A549 (cell line): ENCODE measurements at regions of chr5 and their contacts with region 1.

Region 1: GRCh38 chr5:17216176-17216973 is 1.1 kb upstream of the BASP1 start:
- DNase-seq: peak; percentile 73 to 92
- ATAC-seq: peak; percentile 62 to 79
- H3K4me3 ChIP-seq: peak overlapping the region; percentile 95
- H3K27ac ChIP-seq: peak overlapping the region; percentile 98
- H3K4me1 ChIP-seq: peaks cover 43% of the 10 kb centered on the region
- CTCF ChIP-seq: peak; percentile 88
- EP300 ChIP-seq: peak in 1 of 2 experiments; percentile 24; a peak in 1 of 5 replicates
- POLR2A ChIP-seq: peak; percentile 28; the same call in 1 of the 2 replicates
- RAD21 ChIP-seq: peak; percentile 97 to 98

Region 2: DNA sequence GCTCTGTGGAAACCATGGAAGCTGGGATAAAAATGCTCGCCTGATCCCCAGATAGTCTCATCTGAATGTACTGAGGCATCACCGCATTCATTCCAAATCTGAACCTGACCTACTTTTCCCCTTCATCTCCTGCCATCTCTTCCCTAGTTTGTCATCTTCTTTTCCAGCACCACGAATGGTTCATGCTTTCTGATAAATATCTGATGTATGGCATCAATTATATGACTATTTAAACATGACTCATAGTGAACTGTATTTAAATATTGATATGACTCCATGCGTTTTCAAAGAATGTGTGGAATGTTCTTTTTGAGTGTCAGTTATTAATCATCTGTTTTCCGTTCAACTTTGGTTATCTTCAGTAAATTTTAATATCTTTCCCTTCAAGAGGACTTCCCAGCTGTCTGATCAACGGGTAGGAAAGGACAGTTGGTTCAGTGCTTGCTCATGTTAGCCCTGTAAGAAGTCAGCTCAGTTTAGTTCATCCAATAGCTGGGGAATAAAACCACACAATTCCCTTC is 22.2 kb after region 1 on chr5:
- CTCF ChIA-PET with region 1: interaction called, 10 read pairs
- POLR2A ChIA-PET with region 1: interaction called, 6 read pairs
- DNase-seq: no peak
- ATAC-seq: peak; percentile 32 to 45; a peak in 4 of 6 replicates
- H3K4me3 ChIP-seq: no peak overlapping the region
- H3K27ac ChIP-seq: peak overlapping the region; percentile 27 to 76; a peak in 5 of 6 replicates
- H3K4me1 ChIP-seq: peaks cover 98% of the 10 kb centered on the region
- CTCF ChIP-seq: no peak
- EP300 ChIP-seq: no peak
- POLR2A ChIP-seq: no peak
- RAD21 ChIP-seq: no peak

Region 3: GRCh38 chr5:17305964-17306716 is 89.8 kb after region 1 on chr5:
- CTCF ChIA-PET with region 1: interaction called, 41 read pairs
- POLR2A ChIA-PET with region 1: interaction called, 16 read pairs
- DNase-seq: peak; percentile 68 to 99
- ATAC-seq: peak; percentile 81 to 84
- H3K4me3 ChIP-seq: no peak overlapping the region
- H3K27ac ChIP-seq: peak overlapping the region; percentile 91 to 96
- H3K4me1 ChIP-seq: peaks cover 69% of the 10 kb centered on the region
- CTCF ChIP-seq: no peak
- EP300 ChIP-seq: peak; percentile 100
- POLR2A ChIP-seq: no peak
- RAD21 ChIP-seq: peak; percentile 47 to 88

Region 4: GRCh38 chr5:18113721-18114120 is 897.3 kb after region 1 on chr5:
- CTCF ChIA-PET with region 1: interaction called, 50 read pairs
- POLR2A ChIA-PET with region 1: interaction called, 6 read pairs
- DNase-seq: peak in 1 of 2 experiments; percentile 73
- ATAC-seq: peak; percentile 50 to 63; a peak in 3 of 6 replicates
- H3K4me3 ChIP-seq: no peak overlapping the region
- H3K27ac ChIP-seq: peak overlapping the region; percentile 34 to 70; a peak in 5 of 6 replicates
- H3K4me1 ChIP-seq: peaks cover 23% of the 10 kb centered on the region
- CTCF ChIP-seq: peak; percentile 83
- EP300 ChIP-seq: no peak
- POLR2A ChIP-seq: no peak
- RAD21 ChIP-seq: peak; percentile 90 to 95

Region 5: DNA sequence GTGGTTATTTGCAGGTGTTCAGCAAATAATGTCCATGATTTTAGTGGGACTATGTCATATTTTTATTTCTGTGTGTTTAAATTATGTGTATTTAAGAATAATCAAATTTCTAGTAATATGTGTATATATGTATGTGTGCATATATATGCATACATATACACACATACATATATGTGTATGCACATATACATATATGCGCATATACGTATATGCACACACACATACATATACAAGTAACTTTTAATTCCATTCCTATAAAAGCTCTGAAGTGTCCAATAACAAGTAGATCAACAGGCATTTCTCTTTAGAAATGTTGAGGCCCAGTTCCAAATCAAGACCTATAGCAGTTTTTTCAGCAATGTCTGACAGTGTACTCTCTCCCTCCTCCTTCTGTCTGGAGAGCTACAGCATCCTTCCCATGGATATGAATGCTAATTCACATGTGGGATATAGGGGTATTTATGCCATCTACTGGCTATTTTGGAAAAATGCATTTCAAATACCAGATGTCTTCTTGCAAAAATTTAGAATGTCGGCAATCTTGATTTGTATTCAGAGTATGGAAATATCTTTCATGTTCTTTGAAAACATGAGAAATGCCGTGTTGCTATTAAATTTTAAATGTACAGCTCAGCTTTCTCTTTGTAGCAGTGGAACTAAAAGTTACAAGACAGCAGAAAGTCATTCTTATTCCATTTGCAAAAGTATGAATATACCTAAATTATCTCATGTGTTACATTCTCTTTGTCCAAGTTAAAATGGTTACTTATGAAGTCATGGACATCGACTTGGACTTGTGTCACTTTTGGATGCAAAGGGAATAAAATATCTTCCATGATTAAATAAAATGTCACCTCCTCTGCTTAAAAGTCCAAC is 1065.5 kb after region 1 on chr5:
- CTCF ChIA-PET with region 1: interaction called, 13 read pairs
- POLR2A ChIA-PET with region 1: interaction called, 10 read pairs
- DNase-seq: peak; percentile 67 to 77
- ATAC-seq: peak; percentile 94
- H3K4me3 ChIP-seq: no peak overlapping the region
- H3K27ac ChIP-seq: no peak overlapping the region
- H3K4me1 ChIP-seq: no peaks in the 10 kb centered on the region; the same call in 2 of the 3 replicates
- CTCF ChIP-seq: peak; percentile 73
- EP300 ChIP-seq: no peak
- POLR2A ChIP-seq: no peak
- RAD21 ChIP-seq: peak; percentile 81 to 84

Region 6: GRCh38 chr5:18314192-18314778 is 1097.9 kb after region 1 on chr5:
- CTCF ChIA-PET with region 1: interaction called, 19 read pairs
- POLR2A ChIA-PET with region 1: no interaction called
- DNase-seq: peak; percentile 25 to 33
- ATAC-seq: no peak
- H3K4me3 ChIP-seq: no peak overlapping the region
- H3K27ac ChIP-seq: no peak overlapping the region
- H3K4me1 ChIP-seq: no peaks in the 10 kb centered on the region
- CTCF ChIP-seq: peak; percentile 77
- EP300 ChIP-seq: no peak
- POLR2A ChIP-seq: no peak
- RAD21 ChIP-seq: peak; percentile 67 to 72